ENCODE measurements at regions of chr17 and their contacts with region 1.

Region 1: DNA sequence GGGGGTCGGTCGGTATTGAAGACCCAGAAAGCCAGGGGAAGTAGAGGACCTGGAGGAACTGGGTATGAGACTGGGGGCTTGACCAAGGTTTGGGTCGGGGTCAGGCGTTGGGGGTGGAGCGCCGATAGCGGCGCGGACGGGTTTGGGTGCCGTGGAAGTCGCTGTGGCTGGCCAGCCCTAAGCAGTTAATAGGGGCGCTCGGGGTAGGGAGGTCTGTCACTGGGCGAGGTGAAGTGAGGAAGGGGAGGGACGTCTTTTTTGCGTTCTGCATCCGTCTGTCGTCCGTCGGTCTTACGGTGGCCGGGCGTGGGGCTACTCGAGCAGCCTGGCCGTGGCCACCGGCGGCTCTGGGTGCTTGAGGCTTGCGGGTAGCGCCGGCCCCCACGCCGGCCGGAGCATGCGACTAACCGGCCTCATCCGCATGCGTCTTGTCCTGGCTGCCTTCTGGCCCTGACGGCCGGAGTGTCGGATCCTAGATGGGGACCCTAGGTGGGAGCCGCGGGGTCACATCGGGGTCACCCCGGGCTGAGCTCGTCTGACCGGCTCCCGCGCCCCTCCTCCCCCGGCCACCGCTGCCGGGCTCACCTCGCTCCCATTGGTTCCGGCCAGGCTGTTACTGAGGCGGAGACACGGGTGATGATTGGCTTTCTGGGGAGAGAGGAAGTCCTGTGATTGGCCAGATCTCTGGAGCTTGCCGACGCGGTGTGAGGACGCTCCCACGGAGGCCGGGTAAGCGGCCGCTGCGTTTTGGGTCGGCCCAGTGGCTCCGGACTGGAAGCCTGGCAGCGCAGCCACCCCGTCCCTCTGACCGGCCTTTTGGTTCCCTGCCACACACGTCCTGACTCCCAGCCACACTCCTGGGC is 10.3 kb upstream of the TMEM88 start:
- DNase-seq: peak; percentile 95
- H3K4me3 ChIP-seq: peak overlapping the region; percentile 67 to 72
- H3K27ac ChIP-seq: peak overlapping the region; percentile 98 to 99
- H3K4me1 ChIP-seq: peaks cover 14% of the 10 kb centered on the region
- H3K27me3 ChIP-seq: no peaks in the 10 kb centered on the region
- CTCF ChIP-seq: peak in 1 of 4 experiments; percentile 11
- POLR2A ChIP-seq: peak; percentile 93

Region 2: GRCh38 chr17:7803981-7804380 is 40.5 kb before region 1 on chr17:
- intact Hi-C with region 1: no loop called
- DNase-seq: peak; percentile 32
- H3K4me3 ChIP-seq: no peak overlapping the region
- H3K27ac ChIP-seq: no peak overlapping the region
- H3K4me1 ChIP-seq: no peaks in the 10 kb centered on the region
- H3K27me3 ChIP-seq: no peaks in the 10 kb centered on the region
- CTCF ChIP-seq: no peak
- POLR2A ChIP-seq: no peak

Region 3: GRCh38 chr17:8156246-8156992 is 311.9 kb after region 1 on chr17:
- intact Hi-C with region 1: loop called (anchors 10 kb)
- DNase-seq: peak; percentile 100
- H3K4me3 ChIP-seq: peak overlapping the region; percentile 71 to 95
- H3K27ac ChIP-seq: peak overlapping the region; percentile 100
- H3K4me1 ChIP-seq: peaks cover 25% of the 10 kb centered on the region
- H3K27me3 ChIP-seq: no peaks in the 10 kb centered on the region
- CTCF ChIP-seq: peak in 1 of 4 experiments; percentile 40
- POLR2A ChIP-seq: peak; percentile 100